ENCODE measurements at regions of chr1 and their contacts with region 1.

Region 1: DNA sequence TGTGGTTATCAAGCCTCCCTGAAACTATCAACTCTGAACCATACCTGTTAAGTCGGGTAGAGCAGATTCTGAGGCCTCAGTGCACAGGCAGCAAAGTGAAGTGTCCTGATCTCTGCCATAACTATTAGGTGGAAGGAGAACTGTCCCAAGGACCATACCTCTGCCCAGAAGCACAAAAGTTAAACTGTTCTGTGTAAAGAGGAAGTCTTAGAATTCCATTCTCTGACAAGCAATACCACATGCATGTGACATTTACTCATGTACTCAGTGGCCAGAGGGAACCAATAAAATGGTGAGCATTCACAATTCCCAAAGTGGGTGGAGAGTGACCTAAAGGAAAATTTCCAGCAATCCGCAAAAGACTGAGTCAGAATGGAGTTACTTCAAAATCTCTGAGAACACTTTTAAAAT is 61.0 kb downstream of the TOR3A start:
- DNase-seq: peak; percentile 19
- ATAC-seq: peak; percentile 43
- H3K4me3 ChIP-seq: no peak overlapping the region
- H3K4me3 Mint-ChIP-seq: peak overlapping the region; percentile 0
- H3K27ac ChIP-seq: peak overlapping the region; percentile 4 to 30
- H3K27ac Mint-ChIP-seq: peak overlapping the region; percentile 11
- H3K4me1 ChIP-seq: peaks cover 12 to 16% of the 10 kb centered on the region in 2 donors
- H3K4me1 Mint-ChIP-seq: peaks cover 16% of the 10 kb centered on the region
- H3K27me3 ChIP-seq: no peaks in the 10 kb centered on the region
- H3K27me3 Mint-ChIP-seq: no peaks in the 10 kb centered on the region
- CTCF ChIP-seq: no peak

Region 2: DNA sequence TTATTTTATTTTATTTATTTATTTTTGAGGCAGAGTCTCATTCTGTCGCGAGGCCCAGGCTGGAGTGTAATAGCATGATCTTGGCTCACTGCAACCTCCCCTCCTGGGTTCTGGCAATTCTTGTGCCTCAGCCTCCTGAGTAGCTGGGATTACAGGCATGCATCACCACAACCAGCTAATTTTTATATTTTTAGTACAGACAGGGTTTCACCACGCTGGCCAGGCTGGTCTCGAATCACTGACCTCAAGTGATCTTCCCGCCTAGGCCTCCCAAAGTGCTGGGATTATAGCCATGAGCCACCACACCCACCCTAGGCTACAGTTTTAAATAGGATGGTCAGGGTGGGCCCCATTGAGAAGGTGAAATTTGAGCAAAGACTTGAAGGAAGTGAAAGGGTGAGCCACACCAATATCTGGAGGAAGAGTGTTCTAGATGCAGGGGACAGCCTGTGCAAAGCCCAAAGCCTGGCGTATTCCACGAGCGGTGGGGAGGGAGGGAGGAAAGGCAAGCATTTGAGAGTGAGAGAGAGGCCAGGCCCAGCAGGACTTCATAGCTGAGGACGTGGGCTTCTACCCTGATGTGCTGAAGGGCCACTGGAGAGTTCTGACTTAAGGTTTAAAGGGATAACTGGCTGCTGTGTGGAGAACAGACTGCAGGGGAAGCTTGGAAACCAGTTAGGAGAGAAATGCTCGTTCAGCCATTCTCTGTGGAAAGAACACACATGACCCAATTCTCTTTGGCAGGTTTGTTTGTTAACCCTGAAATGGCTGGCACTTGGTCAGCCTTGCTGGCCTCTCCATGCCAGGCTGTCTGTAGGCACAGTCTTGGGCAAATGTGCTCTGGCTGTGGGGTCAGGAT is 179.8 kb before region 1 on chr1:
- CTCF ChIA-PET with region 1: no interaction called
- POLR2A ChIA-PET with region 1: no interaction called
- intact Hi-C with region 1: no loop called
- DNase-seq: no peak
- ATAC-seq: no peak
- H3K4me3 ChIP-seq: no peak overlapping the region
- H3K4me3 Mint-ChIP-seq: no peak overlapping the region
- H3K27ac ChIP-seq: no peak overlapping the region
- H3K27ac Mint-ChIP-seq: no peak overlapping the region
- H3K4me1 ChIP-seq: no peaks in the 10 kb centered on the region
- H3K4me1 Mint-ChIP-seq: no peaks in the 10 kb centered on the region
- H3K27me3 ChIP-seq: no peaks in the 10 kb centered on the region
- H3K27me3 Mint-ChIP-seq: no peaks in the 10 kb centered on the region
- CTCF ChIP-seq: no peak

Region 3: DNA sequence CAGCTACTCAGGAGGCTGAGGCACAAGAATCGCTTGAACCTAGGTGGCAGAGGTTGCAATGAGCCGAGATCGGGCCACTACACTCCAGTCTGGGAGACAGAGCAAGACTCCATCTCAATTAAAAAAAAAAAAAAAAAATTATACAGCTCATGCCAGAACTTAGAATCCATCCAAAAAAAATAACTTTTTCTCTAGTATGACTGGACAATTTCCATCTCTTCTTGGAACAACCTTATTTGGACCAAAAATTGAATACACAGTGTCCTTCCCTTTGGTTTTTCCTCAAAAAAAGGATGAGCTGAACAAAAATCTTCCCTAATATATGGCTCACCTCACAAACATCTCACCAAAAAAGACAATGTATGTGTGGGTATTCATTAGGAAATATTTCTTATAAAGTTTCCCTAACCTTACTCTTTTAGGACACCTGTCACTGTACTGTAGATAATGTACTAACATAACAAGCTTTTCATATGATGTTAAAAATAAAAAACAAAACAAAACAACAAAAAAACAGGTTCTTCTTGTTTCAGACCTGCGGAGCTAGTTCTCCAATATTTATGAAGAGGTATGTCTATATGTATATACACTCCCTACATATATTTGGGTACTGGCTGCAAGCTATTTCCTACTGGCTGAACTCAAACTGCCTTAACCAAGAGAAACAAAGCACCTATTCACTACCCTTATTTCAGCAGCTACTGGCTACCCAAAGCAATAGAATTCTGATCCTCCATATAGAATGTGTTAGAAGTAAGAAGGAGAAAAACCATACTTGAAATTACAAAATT is 12.9 kb after region 1 on chr1:
- CTCF ChIA-PET with region 1: interaction called, 10 read pairs
- POLR2A ChIA-PET with region 1: no interaction called
- intact Hi-C with region 1: no loop called
- DNase-seq: no peak
- ATAC-seq: no peak
- H3K4me3 ChIP-seq: no peak overlapping the region
- H3K4me3 Mint-ChIP-seq: no peak overlapping the region
- H3K27ac ChIP-seq: no peak overlapping the region
- H3K27ac Mint-ChIP-seq: no peak overlapping the region
- H3K4me1 ChIP-seq: peaks cover 12 to 13% of the 10 kb centered on the region in 2 donors
- H3K4me1 Mint-ChIP-seq: peaks cover 21% of the 10 kb centered on the region
- H3K27me3 ChIP-seq: no peaks in the 10 kb centered on the region
- H3K27me3 Mint-ChIP-seq: no peaks in the 10 kb centered on the region
- CTCF ChIP-seq: no peak